Activated CD8-positive, alpha-beta T cell treated with anti-CD3 and anti-CD28 coated beads for 36 hours (primary cell): ENCODE measurements at regions of chrX and their contacts with region 1.

Region 1: GRCh38 chrX:70133303-70134115 is at the start of gene IGBP1:
- DNase-seq: peak; percentile 87
- ATAC-seq: peak; percentile 80
- H3K4me3 Mint-ChIP-seq: peak within 1 kb of the TSS; percentile 96
- H3K27ac Mint-ChIP-seq: peak within 1 kb of the TSS; percentile 97
- H3K4me1 Mint-ChIP-seq: peaks cover 32% of the 10 kb centered on the region
- H3K27me3 Mint-ChIP-seq: no peaks in the 10 kb centered on the region
- CTCF ChIP-seq: peak; percentile 37
- total RNA-seq, gene IGBP1: 43.5 to 45.1 TPM

Region 2: DNA sequence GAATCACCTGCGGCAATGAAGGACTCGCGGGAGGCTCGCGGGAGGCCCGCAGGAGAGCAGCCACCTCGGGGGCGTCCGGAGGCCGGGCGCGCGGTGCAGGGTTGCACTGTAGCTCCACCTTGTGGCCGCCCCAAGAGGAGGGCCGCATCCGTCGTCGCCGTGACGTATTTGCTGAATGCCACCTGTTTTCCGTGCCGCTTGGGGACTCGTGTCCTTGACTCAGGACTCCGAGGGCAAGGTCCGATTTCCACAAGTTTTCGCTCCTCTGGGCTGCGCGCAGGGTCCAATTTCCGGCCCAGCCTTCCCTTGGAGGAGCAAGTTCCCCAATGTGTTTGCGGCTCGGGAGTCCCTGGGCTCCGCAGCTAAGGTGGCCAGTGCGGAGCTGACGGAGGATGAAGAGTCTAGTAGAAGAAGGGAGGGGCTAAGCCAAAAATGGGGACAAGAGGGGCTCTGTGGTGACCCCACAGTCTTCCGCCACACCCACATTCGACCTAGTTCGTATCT is 300.4 kb after region 1 on chrX:
- CTCF ChIA-PET with region 1: interaction called, 3 read pairs
- POLR2A ChIA-PET with region 1: interaction called, 3 read pairs
- intact Hi-C with region 1: loop called (anchors 10 kb)
- DNase-seq: peak; percentile 83
- ATAC-seq: peak; percentile 79
- H3K4me3 Mint-ChIP-seq: peak overlapping the region; percentile 86
- H3K27ac Mint-ChIP-seq: peak overlapping the region; percentile 91
- H3K4me1 Mint-ChIP-seq: peaks cover 18% of the 10 kb centered on the region
- H3K27me3 Mint-ChIP-seq: no peaks in the 10 kb centered on the region
- CTCF ChIP-seq: peak; percentile 60